ENCODE measurements at regions of chr7 and their contacts with region 1.

Region 1: DNA sequence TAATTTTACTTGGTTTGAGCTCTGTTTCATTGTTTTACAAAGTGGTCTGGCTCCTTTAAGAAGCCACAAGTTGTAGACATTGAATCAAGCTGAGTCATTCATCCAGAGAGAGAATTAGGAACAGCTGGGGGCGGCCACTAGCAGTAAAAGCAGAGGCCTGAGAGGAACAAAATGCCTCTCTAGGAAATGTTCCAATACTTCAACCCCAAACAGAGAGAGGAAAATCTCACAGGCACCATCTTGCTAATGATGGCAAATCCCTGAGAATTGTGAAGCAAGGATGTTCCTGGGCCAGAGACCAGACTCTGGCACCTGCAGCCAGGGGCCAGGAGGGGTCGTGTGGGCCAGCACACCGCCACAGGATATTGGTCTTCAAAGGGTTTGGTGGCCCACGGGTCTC is 26.5 kb upstream of the TRIL start:
- DNase-seq: peak; percentile 69
- ATAC-seq: peak; percentile 89
- H3K4me3 ChIP-seq: no peak overlapping the region
- H3K27ac ChIP-seq: peak overlapping the region; percentile 26; the same call in 1 of the 2 replicates
- H3K4me1 ChIP-seq: peaks cover 18% of the 10 kb centered on the region
- H3K27me3 ChIP-seq: no peaks in the 10 kb centered on the region
- CTCF ChIP-seq: no peak

Region 2: GRCh38 chr7:28203508-28204240 is 781.0 kb before region 1 on chr7:
- CTCF ChIA-PET with region 1: no interaction called
- POLR2A ChIA-PET with region 1: no interaction called
- intact Hi-C with region 1: no loop called
- DNase-seq: no peak
- ATAC-seq: no peak
- H3K4me3 ChIP-seq: no peak overlapping the region
- H3K27ac ChIP-seq: no peak overlapping the region
- H3K4me1 ChIP-seq: no peaks in the 10 kb centered on the region
- H3K27me3 ChIP-seq: peaks cover 18% of the 10 kb centered on the region
- CTCF ChIP-seq: no peak

Region 3: DNA sequence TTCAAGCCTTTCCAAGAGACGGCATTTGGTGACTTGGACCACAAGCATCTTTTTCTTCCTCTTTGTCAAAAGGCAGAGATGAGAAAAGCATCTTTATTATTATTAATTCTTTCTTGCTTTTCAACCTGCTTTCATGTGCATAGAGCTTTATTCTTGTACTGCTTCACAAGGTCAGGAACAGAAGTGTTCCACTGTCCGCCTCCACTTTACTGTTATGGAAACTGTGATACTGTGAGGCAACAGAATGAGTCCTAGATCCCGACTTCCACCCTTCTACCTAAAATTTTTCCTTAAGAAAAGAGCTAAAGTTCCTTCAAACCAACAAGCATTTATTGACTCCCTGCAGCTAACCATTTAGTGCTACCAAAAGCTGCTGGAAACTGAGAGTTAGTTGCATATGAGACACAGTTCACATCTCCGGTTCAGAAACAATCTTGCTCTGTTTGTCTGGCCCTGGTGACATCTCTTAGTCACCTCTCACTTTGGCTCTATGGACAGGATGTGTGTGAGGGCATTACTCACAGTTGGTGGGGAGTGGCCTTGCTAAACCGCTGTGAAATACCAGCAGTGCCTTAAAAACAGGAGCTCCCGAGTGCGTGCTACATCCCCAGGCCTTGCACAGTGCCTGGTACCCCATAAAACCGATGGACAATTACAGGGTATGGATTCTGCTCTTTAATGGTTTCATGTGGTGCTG is 50.6 kb after region 1 on chr7:
- CTCF ChIA-PET with region 1: no interaction called
- POLR2A ChIA-PET with region 1: no interaction called
- intact Hi-C with region 1: loop called (anchors 1 kb)
- DNase-seq: peak; percentile 93
- ATAC-seq: peak; percentile 96
- H3K4me3 ChIP-seq: no peak overlapping the region; the same call in 1 of the 2 replicates
- H3K27ac ChIP-seq: peak overlapping the region; percentile 80
- H3K4me1 ChIP-seq: peaks cover 43% of the 10 kb centered on the region
- H3K27me3 ChIP-seq: no peaks in the 10 kb centered on the region
- CTCF ChIP-seq: no peak

Measured in PC-3 (cell line).